ENCODE measurements at regions of chr15 and their contacts with region 1.

Region 1: DNA sequence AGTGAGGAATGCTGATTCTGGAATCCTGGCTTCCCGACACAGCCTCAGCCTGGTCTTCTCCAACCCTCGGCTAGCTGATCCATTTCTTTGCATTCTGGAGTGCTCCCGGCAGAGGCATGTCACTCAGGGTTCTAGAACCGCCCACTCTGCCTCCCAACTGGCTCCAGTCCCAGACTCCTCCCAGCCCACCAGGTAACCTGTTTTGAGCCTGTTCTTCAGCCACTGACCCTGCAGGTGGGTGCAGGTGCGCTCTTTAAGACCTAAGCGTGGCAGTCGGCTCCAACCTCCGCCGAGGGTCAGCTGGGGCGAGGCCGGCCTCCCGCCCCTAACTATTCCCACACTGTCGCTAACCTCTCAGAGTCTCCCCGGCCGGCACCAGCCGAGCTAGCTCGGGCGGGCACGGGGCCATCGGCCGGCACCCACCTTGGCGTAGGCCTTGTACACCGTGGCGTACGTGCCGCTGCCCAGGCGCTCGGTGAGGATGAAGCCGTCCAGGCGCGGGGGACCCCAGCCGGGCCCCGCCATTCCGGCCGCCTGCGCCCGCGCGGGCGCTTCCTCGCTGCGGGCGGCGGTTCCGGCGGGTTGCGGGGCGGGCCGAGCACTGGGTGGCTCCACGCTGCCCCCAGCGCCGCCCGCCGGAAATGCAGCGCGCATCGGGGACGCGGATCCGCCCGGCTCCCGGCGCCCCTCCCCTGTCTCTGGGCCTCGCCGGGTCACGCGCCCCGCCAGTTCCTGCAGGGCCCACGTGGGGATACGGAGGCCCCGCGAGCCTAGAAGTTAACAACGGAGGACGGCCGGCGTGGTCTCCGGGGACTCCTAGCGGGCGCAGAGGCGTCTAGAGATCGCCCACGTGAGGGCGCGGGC is at the start of gene ULK3:
- DNase-seq: peak; percentile 94
- H3K4me3 ChIP-seq: peak within 1 kb of the TSS; percentile 98
- H3K27ac ChIP-seq: peak within 1 kb of the TSS; percentile 86
- H3K4me1 ChIP-seq: peaks cover 8% of the 10 kb centered on the region
- H3K27me3 ChIP-seq: no peaks in the 10 kb centered on the region
- CTCF ChIP-seq: peak; percentile 60
- total RNA-seq, gene ULK3: 53.3 and 58.3 TPM in 2 replicates

Region 2: DNA sequence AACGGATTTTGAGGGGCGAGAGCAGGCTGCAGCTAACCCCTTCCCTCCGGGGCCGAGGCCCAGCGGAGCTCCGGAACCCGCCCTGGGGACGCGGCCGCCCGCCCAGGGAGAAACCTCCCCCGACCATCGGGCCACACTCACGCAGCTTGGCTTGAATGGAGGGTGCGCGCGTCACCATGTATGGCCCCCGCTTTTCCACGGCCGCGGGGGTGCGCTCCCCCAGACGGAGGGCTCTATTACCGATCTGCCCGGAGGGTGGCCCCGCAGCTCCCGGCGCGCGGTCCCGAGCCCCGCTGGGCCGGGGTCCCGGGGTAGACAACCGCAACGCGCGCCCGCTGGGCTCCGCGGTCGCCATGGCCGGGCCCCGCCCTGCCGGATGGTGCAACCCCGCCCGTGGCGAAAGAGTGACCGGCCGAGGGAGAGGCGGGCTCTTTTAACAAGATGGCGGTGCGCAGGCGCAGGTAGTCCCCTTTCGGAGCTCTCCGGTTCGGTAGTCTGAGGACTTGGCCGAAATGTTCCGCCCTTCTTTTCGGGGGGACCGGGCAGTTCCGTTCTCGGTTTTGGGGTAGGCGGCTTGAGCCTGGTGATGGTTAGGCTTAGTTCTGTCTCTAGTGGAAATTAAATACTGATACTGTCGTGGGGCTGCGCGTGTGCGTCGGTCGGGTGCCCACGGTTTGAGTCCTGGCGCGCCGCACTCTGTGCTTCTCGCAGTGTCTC is 63.8 kb after region 1 on chr15 and contains the start of gene FAM219B:
- CTCF ChIA-PET with region 1: interaction called, 3 read pairs
- POLR2A ChIA-PET with region 1: no interaction called
- intact Hi-C with region 1: loop called (anchors 5 kb)
- DNase-seq: peak; percentile 87
- H3K4me3 ChIP-seq: peak within 1 kb of the TSS; percentile 85
- H3K27ac ChIP-seq: peak within 1 kb of the TSS; percentile 96
- H3K4me1 ChIP-seq: no peaks in the 10 kb centered on the region
- H3K27me3 ChIP-seq: no peaks in the 10 kb centered on the region
- CTCF ChIP-seq: no peak
- total RNA-seq, gene FAM219B: 86.6 and 93.2 TPM in 2 replicates

Measured in A673 (cell line).